ENCODE measurements at regions of chr19 and their contacts with region 1.

Region 1: DNA sequence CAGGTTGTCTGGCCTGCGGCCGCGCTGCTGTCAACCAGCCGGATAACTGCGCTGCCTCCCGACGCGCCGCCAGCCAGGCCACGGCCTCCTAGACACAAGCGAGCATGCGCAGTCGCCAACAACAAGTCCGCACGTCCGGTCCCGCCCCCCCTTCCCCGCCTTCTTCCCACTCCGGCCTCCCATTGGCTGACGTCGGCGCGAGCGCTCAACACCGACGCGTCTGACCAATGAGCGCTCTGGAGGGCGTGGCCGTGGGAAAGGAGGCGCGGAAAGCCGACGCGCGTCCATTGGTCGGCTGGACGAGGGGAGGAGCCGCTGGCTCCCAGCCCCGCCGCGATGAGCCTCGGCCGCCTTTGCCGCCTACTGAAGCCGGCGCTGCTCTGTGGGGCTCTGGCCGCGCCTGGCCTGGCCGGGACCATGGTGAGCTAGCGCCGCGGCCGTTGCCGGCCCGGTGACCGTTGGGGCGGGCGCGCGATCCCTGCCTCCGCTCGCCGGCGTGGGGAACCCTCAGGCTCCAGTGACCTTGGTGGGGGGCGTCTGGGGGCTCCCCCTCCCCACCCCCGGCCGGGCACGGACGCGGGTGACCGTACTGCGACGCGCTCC is at the start of gene GPX4:
- DNase-seq: peak; percentile 97 to 99 (median 98)
- H3K4me3 ChIP-seq: peak within 1 kb of the TSS; percentile 61 to 90 (median 79)
- H3K27ac ChIP-seq: peak within 1 kb of the TSS; percentile 78 to 98 (median 96)
- H3K27me3 ChIP-seq: no peaks in the 10 kb centered on the region
- CTCF ChIP-seq: peak in 11 of 56 donors; percentile 8 to 45 (median 17)
- total RNA-seq, gene GPX4: 189 to 425 (median 310) TPM

Region 2: GRCh38 chr19:1020868-1021425 is 82.9 kb before region 1 on chr19 and contains the start of gene TMEM259:
- intact Hi-C with region 1: loop called (anchors 5 kb)
- DNase-seq: peak; percentile 96 to 99 (median 98)
- H3K4me3 ChIP-seq: peak within 1 kb of the TSS; percentile 43 to 95 (median 84)
- H3K27ac ChIP-seq: peak within 1 kb of the TSS; percentile 54 to 99 (median 95)
- H3K27me3 ChIP-seq: peaks cover 0 to 17% (median 4%) of the 10 kb centered on the region in 45 donors
- CTCF ChIP-seq: peak in 43 of 56 donors; percentile 4 to 61 (median 40)
- total RNA-seq, gene TMEM259: 98.2 to 236 (median 132) TPM